ENCODE measurements at regions of chr14 and their contacts with region 1.

Region 1: GRCh38 chr14:68426661-68427549 is 366.0 kb downstream of the ZFP36L1 start:
- DNase-seq: no peak
- H3K4me3 ChIP-seq: no peak overlapping the region
- H3K27ac ChIP-seq: no peak overlapping the region
- H3K27me3 ChIP-seq: no peaks in the 10 kb centered on the region
- CTCF ChIP-seq: no peak

Region 2: DNA sequence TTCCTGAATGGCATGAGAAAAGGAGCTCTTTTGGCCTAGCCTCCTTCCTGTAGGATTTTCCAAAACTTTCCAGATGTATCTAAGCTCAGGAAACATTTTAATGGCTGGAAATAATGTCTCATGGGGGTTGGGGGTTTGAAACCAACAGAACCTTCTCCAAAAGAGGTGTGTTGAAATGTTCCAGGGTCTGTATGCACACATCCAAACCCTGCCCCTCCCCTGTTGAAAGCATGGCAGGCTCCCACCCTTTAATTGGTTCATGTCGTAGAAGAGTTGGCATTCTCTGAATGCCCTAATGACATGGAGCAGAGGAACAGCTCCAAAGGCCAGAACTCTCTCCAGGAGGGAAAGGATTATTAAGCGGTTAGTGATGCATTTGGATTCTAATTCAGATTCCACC is 12.8 kb after region 1 on chr14:
- intact Hi-C with region 1: loop called in 1 of 2 experiments (anchors 1 kb)
- DNase-seq: no peak
- H3K4me3 ChIP-seq: no peak overlapping the region
- H3K27ac ChIP-seq: peak overlapping the region in 2 of 59 donors; percentile 15 to 36
- H3K27me3 ChIP-seq: no peaks in the 10 kb centered on the region
- CTCF ChIP-seq: no peak

Region 3: DNA sequence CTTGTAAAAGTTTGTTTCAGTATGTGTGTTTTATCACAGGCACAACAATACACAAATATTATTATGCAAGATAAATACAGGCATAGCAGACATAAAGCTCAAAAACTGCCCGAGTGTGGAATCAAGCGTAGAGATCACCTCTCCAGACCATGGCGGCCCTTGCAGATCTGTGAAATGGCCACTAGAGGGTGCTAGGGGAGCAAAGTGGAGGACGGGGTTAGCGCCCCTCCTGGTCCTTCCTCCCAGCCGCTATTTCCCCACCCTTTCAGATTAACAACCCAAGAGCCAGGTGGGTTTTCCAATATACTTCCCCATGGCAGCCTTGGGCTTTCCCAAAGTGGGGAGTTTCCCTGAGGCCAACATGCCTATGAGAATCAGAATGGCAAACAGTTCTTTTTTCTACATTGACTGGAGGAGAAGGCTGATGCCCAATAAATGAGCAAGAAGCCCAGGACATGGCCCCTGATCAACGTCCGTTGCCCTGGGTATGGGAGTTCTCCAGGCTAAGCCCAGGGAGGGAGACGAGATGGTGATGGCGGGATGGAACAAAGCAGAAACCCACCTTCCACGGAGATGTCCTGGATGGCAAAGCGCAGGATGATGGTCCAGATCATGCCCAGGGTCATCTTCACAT is 484.8 kb after region 1 on chr14:
- intact Hi-C with region 1: no loop called
- DNase-seq: peak in 7 of 10 donors; percentile 35 to 71 (median 52)
- H3K4me3 ChIP-seq: no peak overlapping the region
- H3K27ac ChIP-seq: peak overlapping the region in 19 of 59 donors; percentile 4 to 52 (median 28)
- H3K27me3 ChIP-seq: no peaks in the 10 kb centered on the region
- CTCF ChIP-seq: peak; percentile 63 to 98 (median 92)